Activated T-helper 2 cell treated with anti-CD3 and anti-CD28 coated beads, Interferon-gamma antibody, Interleukin-2, Interleukin-4, amounts not matched to agents 10 μg/mL and 5 μg/mL and 100 μg/mL, durations not matched to agents 14 hours and 24 hours and 36 hours (primary cell): ENCODE measurements at regions of chr21 and their contacts with region 1.

Region 1: GRCh38 chr21:34888569-34889319 is 160.4 kb downstream of the RUNX1 start:
- DNase-seq: peak; percentile 81
- H3K4me3 Mint-ChIP-seq: peak overlapping the region; percentile 98
- H3K27ac Mint-ChIP-seq: peak overlapping the region; percentile 100
- H3K4me1 Mint-ChIP-seq: peaks cover 36% of the 10 kb centered on the region
- H3K27me3 Mint-ChIP-seq: no peaks in the 10 kb centered on the region

Region 2: DNA sequence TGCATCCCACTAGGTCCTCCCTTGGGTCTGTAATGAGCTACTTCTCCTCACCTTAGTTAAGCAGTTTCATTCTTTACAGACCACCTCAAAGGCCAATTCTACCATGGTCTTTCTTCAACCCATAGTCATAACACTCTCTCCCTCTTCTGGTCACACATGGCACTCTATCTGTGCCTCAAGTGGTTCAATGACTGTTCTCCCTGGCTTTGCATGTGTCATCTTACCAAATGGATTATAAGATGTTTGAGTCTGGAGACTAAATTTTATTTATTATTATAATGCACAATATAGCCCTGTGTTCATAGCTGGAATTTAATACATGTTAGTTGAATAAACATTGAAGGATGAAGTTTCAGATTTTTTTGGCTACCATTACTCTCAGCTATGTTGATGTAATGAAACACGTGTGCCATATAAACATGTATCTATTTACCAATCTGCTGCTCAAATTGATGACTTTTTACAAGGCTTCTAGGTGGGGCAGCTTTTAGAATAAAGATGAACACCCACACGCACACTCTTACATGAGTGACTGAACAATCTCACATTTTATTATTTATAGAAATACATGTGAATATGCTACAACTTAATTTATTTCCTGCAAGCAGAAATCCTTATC is 58.3 kb after region 1 on chr21:
- intact Hi-C with region 1: loop called (anchors 1 kb)
- DNase-seq: no peak
- H3K4me3 Mint-ChIP-seq: no peak overlapping the region
- H3K27ac Mint-ChIP-seq: peak overlapping the region; percentile 83
- H3K4me1 Mint-ChIP-seq: peaks cover 80% of the 10 kb centered on the region
- H3K27me3 Mint-ChIP-seq: no peaks in the 10 kb centered on the region

Region 3: GRCh38 chr21:35045542-35046262 is 157.0 kb after region 1 on chr21:
- intact Hi-C with region 1: loop called (anchors 1 kb)
- DNase-seq: peak; percentile 46
- H3K4me3 Mint-ChIP-seq: peak overlapping the region; percentile 93
- H3K27ac Mint-ChIP-seq: peak overlapping the region; percentile 96
- H3K4me1 Mint-ChIP-seq: peaks cover 75% of the 10 kb centered on the region
- H3K27me3 Mint-ChIP-seq: no peaks in the 10 kb centered on the region

Region 4: GRCh38 chr21:35150562-35151226 is 261.9 kb after region 1 on chr21:
- intact Hi-C with region 1: loop called (anchors 5 kb)
- DNase-seq: no peak
- H3K4me3 Mint-ChIP-seq: no peak overlapping the region
- H3K27ac Mint-ChIP-seq: peak overlapping the region; percentile 88
- H3K4me1 Mint-ChIP-seq: peaks cover 52% of the 10 kb centered on the region
- H3K27me3 Mint-ChIP-seq: no peaks in the 10 kb centered on the region

Region 5: GRCh38 chr21:35400233-35400957 is 511.7 kb after region 1 on chr21:
- intact Hi-C with region 1: loop called (anchors 2 kb)
- DNase-seq: peak; percentile 20
- H3K4me3 Mint-ChIP-seq: peak overlapping the region; percentile 15
- H3K27ac Mint-ChIP-seq: peak overlapping the region; percentile 48
- H3K4me1 Mint-ChIP-seq: peaks cover 26% of the 10 kb centered on the region
- H3K27me3 Mint-ChIP-seq: no peaks in the 10 kb centered on the region